Activated CD4-positive, alpha-beta T cell treated with anti-CD3 and anti-CD28 coated beads, Interleukin-2, amount 10 ng/mL, durations not matched to agents 24 days and 14 days (primary cell): ENCODE measurements at regions of chr4 and their contacts with region 1.

Region 1: GRCh38 chr4:126778348-126778747 is 854.4 kb upstream of the INTU start:
- DNase-seq: no peak
- H3K4me3 Mint-ChIP-seq: no peak overlapping the region
- H3K27ac Mint-ChIP-seq: no peak overlapping the region
- H3K4me1 Mint-ChIP-seq: no peaks in the 10 kb centered on the region
- H3K27me3 Mint-ChIP-seq: no peaks in the 10 kb centered on the region

Region 2: GRCh38 chr4:126756050-126756829 is 22.1 kb before region 1 on chr4:
- intact Hi-C with region 1: loop called (anchors 1 kb)
- DNase-seq: no peak
- H3K4me3 Mint-ChIP-seq: no peak overlapping the region
- H3K27ac Mint-ChIP-seq: no peak overlapping the region
- H3K4me1 Mint-ChIP-seq: no peaks in the 10 kb centered on the region
- H3K27me3 Mint-ChIP-seq: no peaks in the 10 kb centered on the region